Left cardiac atrium (tissue), 4 donors: ENCODE measurements at regions of chr15 and their contacts with region 1.

Region 1: GRCh38 chr15:89893696-89894455 is at the start of gene AP3S2:
- DNase-seq: peak; percentile 92
- ATAC-seq: peak; percentile 99
- total RNA-seq, gene AP3S2: 33.0 to 35.6 TPM

Region 2: GRCh38 chr15:89543389-89543788 is 350.5 kb before region 1 on chr15:
- intact Hi-C with region 1: no loop called
- DNase-seq: no peak
- ATAC-seq: no peak

Region 3: GRCh38 chr15:89765694-89766093 is 128.2 kb before region 1 on chr15:
- intact Hi-C with region 1: no loop called
- DNase-seq: no peak
- ATAC-seq: no peak

Region 4: DNA sequence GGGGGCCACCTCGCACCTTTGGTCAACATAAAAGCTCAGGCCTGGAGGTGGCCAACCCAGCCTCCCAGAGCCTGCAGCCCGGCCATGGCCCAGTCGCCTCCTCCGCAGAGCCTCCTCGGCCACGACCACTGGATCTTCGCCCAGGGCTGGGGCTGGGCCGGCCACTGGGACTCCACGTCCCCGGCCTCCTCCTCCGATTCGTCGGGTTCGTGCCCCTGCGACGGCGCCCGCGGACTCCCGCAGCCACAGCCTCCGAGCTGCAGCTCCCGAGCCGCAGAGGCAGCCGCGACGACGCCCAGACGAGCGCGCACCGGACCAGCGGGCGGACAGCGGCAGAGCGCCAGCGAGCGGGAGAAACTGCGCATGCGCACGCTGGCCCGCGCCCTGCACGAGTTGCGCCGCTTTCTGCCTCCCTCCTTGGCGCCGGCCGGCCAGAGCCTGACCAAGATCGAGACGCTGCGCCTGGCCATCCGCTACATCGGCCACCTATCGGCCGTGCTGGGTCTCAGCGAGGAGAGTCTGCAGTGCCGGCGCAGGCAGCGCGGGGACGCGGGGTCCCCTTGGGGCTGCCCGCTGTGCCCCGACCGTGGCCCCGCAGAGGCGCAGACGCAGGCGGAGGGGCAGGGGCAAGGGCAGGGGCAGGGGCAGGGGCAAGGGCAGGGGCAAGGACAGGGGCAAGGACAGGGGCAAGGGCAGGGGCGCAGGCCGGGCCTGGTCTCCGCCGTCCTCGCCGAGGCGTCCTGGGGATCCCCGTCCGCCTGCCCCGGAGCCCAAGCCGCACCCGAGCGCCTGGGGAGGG is 117.4 kb before region 1 on chr15 and contains the start of gene MESP2:
- intact Hi-C with region 1: no loop called
- DNase-seq: peak; percentile 90
- ATAC-seq: peak; percentile 94
- total RNA-seq, gene MESP2: 0.16 to 0.56 TPM

Region 5: DNA sequence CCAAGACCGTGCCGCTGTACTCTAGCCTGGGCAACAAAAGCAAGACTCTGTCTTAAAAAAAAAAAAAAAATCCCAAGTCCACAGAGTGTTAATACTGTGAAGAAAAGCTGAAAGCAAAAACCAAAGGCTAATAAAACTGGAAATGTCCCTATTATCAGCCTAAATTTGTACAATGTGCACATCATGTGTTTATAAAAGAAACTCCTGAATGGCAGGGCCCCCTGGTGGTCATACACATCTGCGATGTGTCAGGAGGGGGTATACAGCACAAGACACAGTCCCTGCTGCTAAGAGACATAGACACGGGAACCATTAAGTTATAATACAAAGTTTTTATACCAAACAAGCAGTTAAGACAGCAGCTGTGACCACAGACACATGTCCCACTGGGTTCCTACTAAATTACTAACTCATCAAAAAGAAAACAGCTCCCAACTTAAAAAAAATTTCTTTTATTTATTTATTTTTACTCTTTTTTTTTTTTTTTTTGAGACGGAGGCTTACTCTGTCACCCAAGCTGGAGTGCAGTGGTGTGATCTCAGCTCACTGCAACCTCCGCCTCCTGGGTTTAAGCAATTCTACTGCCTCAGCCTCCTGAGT is 177.4 kb after region 1 on chr15:
- intact Hi-C with region 1: loop called in 1 of 2 experiments (anchors 2 kb)
- DNase-seq: peak; percentile 90
- ATAC-seq: peak; percentile 70 to 81

Region 6: DNA sequence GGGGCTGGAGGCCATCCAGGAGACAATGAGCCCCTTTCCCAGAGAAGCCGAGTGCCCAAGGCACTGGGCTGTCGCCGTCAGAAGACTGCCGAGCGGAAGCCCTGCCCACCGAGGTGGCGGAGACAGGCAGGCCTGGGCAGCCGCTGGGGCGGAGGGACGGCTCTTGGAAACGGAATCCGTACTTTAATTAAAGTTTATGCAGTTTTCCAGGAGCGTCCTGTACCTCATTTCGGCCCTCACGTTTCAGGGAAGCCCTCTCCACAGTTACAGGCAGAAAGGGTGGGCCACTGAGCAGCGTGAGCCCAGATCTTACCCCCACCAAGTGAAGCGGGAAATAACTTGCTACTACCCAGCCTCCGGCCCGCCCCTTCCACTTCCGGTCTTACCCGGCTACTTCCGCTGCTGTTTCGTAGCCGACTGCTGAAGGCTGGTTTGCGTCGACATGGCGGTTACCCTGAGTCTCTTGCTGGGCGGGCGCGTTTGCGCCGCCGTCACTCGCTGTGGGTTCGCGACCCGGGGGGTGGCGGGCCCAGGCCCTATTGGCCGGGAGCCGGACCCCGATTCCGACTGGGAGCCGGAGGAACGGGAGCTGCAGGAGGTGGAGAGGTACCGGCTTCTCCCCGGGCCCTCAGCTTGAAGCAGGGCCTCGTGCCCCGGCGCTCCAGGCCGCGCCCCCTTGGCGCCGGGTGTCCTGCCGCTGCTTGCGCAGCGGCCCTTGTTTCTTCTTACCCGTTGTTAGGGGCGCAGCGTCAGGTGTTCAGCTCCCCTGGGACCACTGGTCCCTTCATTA is 371.6 kb after region 1 on chr15 and contains the start of gene NGRN:
- intact Hi-C with region 1: loop called in 1 of 2 experiments (anchors 10 kb)
- DNase-seq: peak; percentile 93
- ATAC-seq: peak; percentile 96 to 97
- total RNA-seq, gene NGRN: 115 to 131 TPM